ENCODE measurements at regions of chr11 and their contacts with region 1.

Region 1: DNA sequence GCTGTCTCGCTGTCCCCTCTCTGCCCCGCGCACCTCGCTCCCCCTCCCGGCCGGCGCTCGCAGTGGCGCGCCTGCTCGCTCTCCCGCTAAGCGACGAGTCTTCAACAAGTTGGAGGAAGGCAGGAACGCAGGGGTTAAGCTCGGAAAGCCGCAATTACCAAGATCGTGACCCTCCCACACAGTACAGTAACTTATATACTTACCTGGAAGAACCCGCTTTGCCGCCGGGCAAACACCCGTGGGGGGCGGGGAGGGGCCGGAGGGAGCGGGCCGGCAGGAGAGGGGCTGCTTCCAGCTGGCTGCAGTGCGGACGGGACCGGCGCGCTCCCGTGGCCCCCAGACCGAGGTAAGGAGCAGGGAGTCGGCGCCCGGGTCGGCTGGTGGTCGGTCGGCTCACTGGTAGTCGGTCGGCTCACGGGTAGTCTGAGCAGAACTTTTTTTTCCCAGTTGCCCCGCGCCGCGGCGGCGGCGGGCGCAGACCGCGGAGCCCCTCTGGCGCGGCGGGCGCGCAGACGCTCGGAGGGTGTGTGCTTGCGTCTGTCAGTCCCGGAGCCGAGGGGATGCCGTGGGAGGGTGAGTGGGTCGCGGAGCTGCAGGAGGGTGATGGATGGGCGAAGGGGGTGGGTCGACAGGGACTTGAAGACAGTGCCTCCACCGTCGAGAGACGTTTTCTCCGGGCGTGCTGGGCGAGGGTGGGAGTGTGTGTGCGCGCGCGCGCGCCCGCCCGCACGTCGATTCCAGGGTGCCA is 101.2 kb upstream of the HSD17B12 start:
- DNase-seq: no peak
- ATAC-seq: no peak
- H3K4me3 ChIP-seq: peak overlapping the region; percentile 61 to 71 (median 64)
- H3K27ac ChIP-seq: no peak overlapping the region
- H3K4me1 ChIP-seq: peaks cover 39 to 56% of the 10 kb centered on the region in 2 donors
- H3K27me3 ChIP-seq: peaks cover 92 to 100% (median 97%) of the 10 kb centered on the region in 3 donors
- CTCF ChIP-seq: peak in 2 of 5 experiments; percentile 29 to 43
- POLR2A ChIP-seq: no peak

Region 2: GRCh38 chr11:43680521-43681400 is 101.4 kb after region 1 on chr11 and contains the start of gene HSD17B12:
- in situ Hi-C with region 1: no loop called
- intact Hi-C with region 1: loop called (anchors 10 kb)
- DNase-seq: peak; percentile 98
- ATAC-seq: peak; percentile 99
- H3K4me3 ChIP-seq: peak within 1 kb of the TSS; percentile 73 to 97 (median 94)
- H3K27ac ChIP-seq: peak within 1 kb of the TSS; percentile 87 to 94 (median 92)
- H3K4me1 ChIP-seq: peaks cover 29 to 34% of the 10 kb centered on the region in 2 donors
- H3K27me3 ChIP-seq: no peaks in the 10 kb centered on the region
- CTCF ChIP-seq: no peak
- POLR2A ChIP-seq: peak; percentile 71 to 91
- total RNA-seq, gene HSD17B12: 20.5 to 41.1 (median 28.6) TPM

Region 3: GRCh38 chr11:43708776-43709175 is 129.4 kb after region 1 on chr11:
- in situ Hi-C with region 1: loop called in 1 of 4 experiments (anchors 10 kb)
- intact Hi-C with region 1: loop called (anchors 5 kb)
- DNase-seq: no peak
- ATAC-seq: peak in 1 of 2 donors; percentile 60
- H3K4me3 ChIP-seq: no peak overlapping the region
- H3K27ac ChIP-seq: no peak overlapping the region
- H3K4me1 ChIP-seq: no peaks in the 10 kb centered on the region
- H3K27me3 ChIP-seq: no peaks in the 10 kb centered on the region
- CTCF ChIP-seq: peak in 4 of 5 experiments; percentile 9 to 57 (median 38)
- POLR2A ChIP-seq: no peak

Region 4: GRCh38 chr11:43830928-43831440 is 251.6 kb after region 1 on chr11:
- in situ Hi-C with region 1: no loop called
- intact Hi-C with region 1: loop called (anchors 10 kb)
- DNase-seq: peak; percentile 32 to 48
- ATAC-seq: peak; percentile 98 to 99
- H3K4me3 ChIP-seq: no peak overlapping the region
- H3K27ac ChIP-seq: peak overlapping the region; percentile 65 to 75 (median 74)
- H3K4me1 ChIP-seq: peaks cover 35 to 43% of the 10 kb centered on the region in 2 donors
- H3K27me3 ChIP-seq: no peaks in the 10 kb centered on the region
- CTCF ChIP-seq: no peak
- POLR2A ChIP-seq: no peak